Upper lobe of right lung (tissue), 1 donor: ENCODE measurements at regions of chr16 and their contacts with region 1.

Region 1: DNA sequence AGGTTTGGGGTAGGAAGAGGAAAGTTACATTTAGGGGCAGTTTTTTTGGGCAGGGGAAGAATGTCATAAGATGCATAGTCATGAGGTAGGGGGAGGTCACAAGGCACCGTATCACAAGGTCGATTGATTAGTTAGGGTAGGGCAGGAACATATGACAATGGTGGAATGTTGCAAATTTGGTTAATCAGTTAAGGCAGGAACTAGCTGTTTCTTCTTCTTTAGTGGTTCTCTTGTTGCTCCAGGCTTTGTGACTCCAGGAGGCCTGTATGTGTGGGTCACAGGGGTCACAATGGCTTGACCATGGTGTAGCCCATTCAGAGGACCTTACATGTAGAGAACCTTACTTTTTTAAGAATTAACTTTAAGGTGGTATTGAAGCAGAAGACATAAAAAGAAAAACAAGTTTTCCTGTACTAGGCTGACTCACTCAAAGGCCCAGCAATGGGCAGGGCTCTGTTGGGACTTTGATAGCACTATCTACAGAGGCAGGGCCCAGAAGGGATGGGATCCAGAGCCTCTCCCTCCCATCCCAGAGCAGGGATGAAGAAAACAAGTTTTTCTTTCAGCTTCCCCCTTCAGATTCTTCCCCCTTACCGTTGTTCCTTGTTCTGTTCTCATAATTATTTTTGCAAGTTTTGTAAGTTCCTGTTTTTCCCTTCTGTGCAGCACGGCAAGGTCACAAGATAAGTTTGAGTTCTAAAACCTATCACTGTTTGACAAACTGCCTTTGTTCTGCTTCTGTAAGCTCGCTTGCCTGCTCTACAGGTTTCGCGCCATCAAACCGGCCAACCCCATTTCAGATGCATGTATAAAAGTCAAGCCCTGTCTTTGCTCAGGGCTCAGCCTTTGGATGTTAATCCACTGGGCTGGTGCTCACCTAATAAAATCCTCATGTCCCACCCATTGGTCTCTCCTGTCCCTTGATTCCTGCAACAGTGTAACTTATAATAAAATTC is 45.8 kb upstream of the ATF7IP2 start:
- DNase-seq: peak; percentile 15
- ATAC-seq: peak; percentile 44
- H3K4me3 ChIP-seq: no peak overlapping the region
- H3K27ac ChIP-seq: no peak overlapping the region
- H3K4me1 ChIP-seq: no peaks in the 10 kb centered on the region
- H3K27me3 ChIP-seq: no peaks in the 10 kb centered on the region
- CTCF ChIP-seq: no peak

Region 2: GRCh38 chr16:10228546-10229178 is 111.4 kb before region 1 on chr16:
- intact Hi-C with region 1: loop called (anchors 5 kb)
- DNase-seq: no peak
- ATAC-seq: no peak
- H3K4me3 ChIP-seq: no peak overlapping the region
- H3K27ac ChIP-seq: no peak overlapping the region
- H3K4me1 ChIP-seq: no peaks in the 10 kb centered on the region
- H3K27me3 ChIP-seq: no peaks in the 10 kb centered on the region
- CTCF ChIP-seq: no peak